ENCODE measurements at regions of chr6 and their contacts with region 1.

Region 1: GRCh38 chr6:57316581-57317059 is 810 bp upstream of the PRIM2 start:
- H3K4me3 Mint-ChIP-seq: peak overlapping the region; percentile 94
- H3K27ac Mint-ChIP-seq: peak overlapping the region; percentile 93
- H3K4me1 Mint-ChIP-seq: peaks cover 33% of the 10 kb centered on the region
- H3K27me3 Mint-ChIP-seq: peaks cover 6% of the 10 kb centered on the region

Region 2: GRCh38 chr6:56955171-56956045 is 361.2 kb before region 1 on chr6:
- intact Hi-C with region 1: loop called (anchors 1 kb)
- H3K4me3 Mint-ChIP-seq: peak overlapping the region; percentile 57
- H3K27ac Mint-ChIP-seq: no peak overlapping the region
- H3K4me1 Mint-ChIP-seq: peaks cover 17% of the 10 kb centered on the region
- H3K27me3 Mint-ChIP-seq: peaks cover 36% of the 10 kb centered on the region

Region 3: DNA sequence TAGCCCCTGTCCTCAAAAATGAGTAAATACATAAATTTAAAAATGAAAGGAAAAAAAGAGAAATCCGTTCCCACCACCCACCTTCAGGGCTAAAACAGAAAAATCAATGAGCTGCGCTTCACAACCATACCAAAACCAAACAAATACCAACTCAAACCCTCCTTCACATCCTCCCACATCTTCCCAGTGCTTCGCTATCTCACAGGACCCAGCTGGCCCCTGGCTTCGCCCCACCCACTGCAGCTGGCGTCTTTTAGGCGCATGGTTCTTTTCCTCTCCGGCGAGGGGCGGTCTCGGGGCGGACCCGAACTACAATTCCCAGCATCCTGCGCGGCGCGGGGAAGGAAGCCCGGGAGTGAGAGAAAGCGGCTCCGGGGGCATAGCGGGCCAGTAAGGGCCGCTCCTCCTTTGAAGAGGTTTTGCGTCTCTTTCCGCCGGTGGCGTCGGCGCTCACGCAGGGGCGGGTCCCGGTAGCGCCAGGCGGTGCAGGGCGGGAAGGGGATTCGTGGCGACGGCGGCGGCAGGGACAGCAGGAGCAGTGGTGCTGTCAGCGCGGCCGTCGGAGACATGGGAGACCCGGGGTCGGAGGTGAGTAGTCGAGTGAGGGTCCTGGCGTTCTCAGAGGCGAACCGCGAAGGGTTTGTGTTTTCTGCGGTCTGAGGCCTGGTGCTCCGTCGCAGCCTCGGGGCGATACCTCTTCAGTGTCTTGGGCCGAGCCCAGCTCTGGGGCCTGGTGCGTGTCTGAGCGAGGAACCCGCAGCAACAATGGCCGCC is 226.7 kb before region 1 on chr6 and contains the start of gene ZNF451:
- intact Hi-C with region 1: loop called (anchors 1 kb)
- H3K4me3 Mint-ChIP-seq: peak within 1 kb of the TSS; percentile 94
- H3K27ac Mint-ChIP-seq: peak within 1 kb of the TSS; percentile 93
- H3K4me1 Mint-ChIP-seq: peaks cover 38% of the 10 kb centered on the region
- H3K27me3 Mint-ChIP-seq: no peaks in the 10 kb centered on the region

Region 4: DNA sequence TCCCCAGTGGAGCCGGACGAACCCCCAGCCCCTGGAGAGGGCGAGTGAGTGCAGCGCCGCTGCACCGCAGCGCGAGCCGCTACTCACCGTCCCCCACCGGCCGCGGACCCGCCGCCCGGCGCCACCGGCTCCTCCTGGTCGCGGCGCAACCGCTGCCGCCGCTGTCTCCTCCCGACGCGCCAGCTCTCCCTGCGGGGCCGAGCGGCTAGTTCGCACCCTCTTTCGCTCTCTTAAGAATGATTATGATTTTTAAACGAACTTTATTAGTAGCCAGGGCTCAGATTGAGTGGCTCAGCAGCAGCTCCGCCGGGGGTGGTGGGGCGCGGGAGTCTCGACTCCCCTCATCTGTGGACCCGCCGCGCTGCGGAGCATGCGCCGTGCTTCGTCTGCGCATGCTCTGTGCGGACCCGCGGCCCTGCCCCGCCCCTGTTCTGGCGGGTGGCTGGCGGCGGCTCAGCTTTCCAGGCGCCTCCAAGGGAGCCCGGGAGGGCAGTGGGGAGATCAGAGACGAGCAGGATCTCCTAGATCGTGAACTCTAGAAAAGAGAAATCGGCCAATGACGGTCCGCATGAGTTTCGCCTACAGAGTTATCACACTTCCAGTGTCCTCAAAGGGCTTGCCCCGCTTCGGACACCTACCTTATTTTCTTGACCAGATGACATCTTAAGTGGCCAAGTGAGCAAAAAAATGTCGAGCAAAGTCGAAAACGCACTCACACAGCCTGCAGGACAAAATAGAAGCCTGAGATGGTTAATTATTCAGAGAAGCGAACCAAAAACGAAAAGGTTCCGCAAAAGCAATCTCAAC is 94.5 kb before region 1 on chr6 and contains the start of gene RAB23:
- intact Hi-C with region 1: loop called (anchors 2 kb)
- H3K4me3 Mint-ChIP-seq: peak within 1 kb of the TSS; percentile 98
- H3K27ac Mint-ChIP-seq: peak within 1 kb of the TSS; percentile 76
- H3K4me1 Mint-ChIP-seq: peaks cover 10% of the 10 kb centered on the region
- H3K27me3 Mint-ChIP-seq: peaks cover 22% of the 10 kb centered on the region